ENCODE measurements at regions of chr13 and their contacts with region 1.

Region 1: DNA sequence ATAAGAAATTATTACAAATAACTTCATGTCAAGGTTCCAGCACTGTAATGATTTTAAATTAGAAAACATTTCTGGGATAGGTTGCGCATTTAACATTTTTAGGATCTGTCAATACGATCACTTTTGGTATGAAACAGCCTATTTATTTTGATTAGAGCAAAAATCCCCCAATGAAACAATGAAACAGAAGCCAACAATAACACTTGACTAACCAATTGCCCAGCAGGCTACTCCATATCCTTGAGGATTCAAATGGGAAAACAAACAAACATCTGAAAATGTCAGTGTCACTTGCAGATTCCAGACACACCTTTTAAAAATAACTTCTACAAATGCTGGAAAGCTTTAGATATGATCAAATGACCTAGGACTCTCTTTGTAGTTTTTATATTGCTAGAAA is 1412.5 kb upstream of the PRR20A start:
- DNase-seq: no peak
- H3K4me3 Mint-ChIP-seq: no peak overlapping the region
- H3K27ac Mint-ChIP-seq: no peak overlapping the region
- H3K4me1 Mint-ChIP-seq: no peaks in the 10 kb centered on the region
- H3K27me3 Mint-ChIP-seq: no peaks in the 10 kb centered on the region

Region 2: GRCh38 chr13:55632402-55632801 is 95.8 kb before region 1 on chr13:
- intact Hi-C with region 1: no loop called
- DNase-seq: no peak
- H3K4me3 Mint-ChIP-seq: no peak overlapping the region
- H3K27ac Mint-ChIP-seq: no peak overlapping the region
- H3K4me1 Mint-ChIP-seq: no peaks in the 10 kb centered on the region
- H3K27me3 Mint-ChIP-seq: no peaks in the 10 kb centered on the region

Region 3: DNA sequence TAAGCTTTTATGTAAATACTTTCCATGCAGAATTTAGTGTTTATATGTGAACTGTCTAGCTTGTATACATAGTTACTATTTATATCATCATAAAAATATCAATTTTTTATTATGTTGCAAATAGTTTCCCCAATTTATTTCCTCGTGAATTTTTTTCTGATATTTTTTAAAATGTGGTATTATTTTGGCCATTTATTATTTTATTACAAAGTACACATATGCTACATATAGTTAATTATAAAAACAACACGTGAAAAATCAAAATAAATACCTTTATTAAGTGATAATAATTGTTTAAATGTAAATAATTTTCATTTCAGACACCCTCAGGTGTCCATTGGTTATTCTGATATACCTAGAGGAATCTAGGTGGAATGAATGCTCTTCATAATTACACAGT is 17.6 kb after region 1 on chr13:
- intact Hi-C with region 1: loop called (anchors 2 kb)
- DNase-seq: no peak
- H3K4me3 Mint-ChIP-seq: no peak overlapping the region
- H3K27ac Mint-ChIP-seq: no peak overlapping the region
- H3K4me1 Mint-ChIP-seq: no peaks in the 10 kb centered on the region
- H3K27me3 Mint-ChIP-seq: no peaks in the 10 kb centered on the region